Activated CD8-positive, alpha-beta T cell treated with anti-CD3 and anti-CD28 coated beads for 36 hours (primary cell): ENCODE measurements at regions of chr2 and their contacts with region 1.

Region 1: GRCh38 chr2:102005989-102006885 is 14.5 kb downstream of the IL1R2 start:
- DNase-seq: peak; percentile 54
- ATAC-seq: peak; percentile 65
- H3K4me3 Mint-ChIP-seq: no peak overlapping the region
- H3K27ac Mint-ChIP-seq: no peak overlapping the region
- H3K4me1 Mint-ChIP-seq: peaks cover 14% of the 10 kb centered on the region
- H3K27me3 Mint-ChIP-seq: no peaks in the 10 kb centered on the region
- CTCF ChIP-seq: peak; percentile 64

Region 2: DNA sequence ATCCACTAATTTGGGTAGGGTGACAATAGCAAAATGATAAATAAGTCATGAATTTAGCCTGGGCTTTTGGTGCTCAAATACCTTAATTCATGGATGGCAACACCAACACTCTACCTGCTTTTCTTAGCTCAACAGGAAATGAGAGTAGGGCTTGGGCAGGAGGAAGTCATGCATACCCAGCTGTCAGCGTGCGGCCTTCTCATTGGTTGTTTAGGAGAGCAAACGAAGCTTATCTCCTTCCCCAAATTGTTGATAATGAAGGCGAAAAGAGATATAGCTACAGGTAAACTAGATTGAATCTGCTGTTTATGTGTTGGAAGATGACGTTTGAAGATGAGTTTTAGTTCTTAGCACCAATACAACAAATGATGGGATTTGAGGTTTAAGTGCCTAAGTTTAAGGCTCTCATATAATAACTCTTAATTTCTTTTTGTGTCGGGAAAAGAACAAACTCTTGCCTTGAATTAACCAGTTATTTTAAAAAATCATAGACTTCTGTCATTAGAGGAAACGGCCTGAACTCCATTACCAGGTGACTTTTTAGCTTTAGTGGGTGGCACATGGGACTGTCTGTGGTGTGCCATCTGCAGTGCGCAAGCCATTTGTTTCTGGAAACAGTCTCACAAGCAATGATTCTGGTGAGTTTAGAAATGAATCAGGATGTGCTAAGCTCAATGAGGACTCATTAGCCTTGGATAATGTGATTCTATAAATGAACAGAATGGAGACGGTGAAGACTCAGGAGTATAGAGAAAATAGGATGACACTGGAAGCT is 289.0 kb before region 1 on chr2:
- CTCF ChIA-PET with region 1: no interaction called
- POLR2A ChIA-PET with region 1: no interaction called
- intact Hi-C with region 1: no loop called
- DNase-seq: peak; percentile 68
- ATAC-seq: peak; percentile 28
- H3K4me3 Mint-ChIP-seq: peak overlapping the region; percentile 10
- H3K27ac Mint-ChIP-seq: peak overlapping the region; percentile 99
- H3K4me1 Mint-ChIP-seq: peaks cover 72% of the 10 kb centered on the region
- H3K27me3 Mint-ChIP-seq: no peaks in the 10 kb centered on the region
- CTCF ChIP-seq: no peak

Region 3: DNA sequence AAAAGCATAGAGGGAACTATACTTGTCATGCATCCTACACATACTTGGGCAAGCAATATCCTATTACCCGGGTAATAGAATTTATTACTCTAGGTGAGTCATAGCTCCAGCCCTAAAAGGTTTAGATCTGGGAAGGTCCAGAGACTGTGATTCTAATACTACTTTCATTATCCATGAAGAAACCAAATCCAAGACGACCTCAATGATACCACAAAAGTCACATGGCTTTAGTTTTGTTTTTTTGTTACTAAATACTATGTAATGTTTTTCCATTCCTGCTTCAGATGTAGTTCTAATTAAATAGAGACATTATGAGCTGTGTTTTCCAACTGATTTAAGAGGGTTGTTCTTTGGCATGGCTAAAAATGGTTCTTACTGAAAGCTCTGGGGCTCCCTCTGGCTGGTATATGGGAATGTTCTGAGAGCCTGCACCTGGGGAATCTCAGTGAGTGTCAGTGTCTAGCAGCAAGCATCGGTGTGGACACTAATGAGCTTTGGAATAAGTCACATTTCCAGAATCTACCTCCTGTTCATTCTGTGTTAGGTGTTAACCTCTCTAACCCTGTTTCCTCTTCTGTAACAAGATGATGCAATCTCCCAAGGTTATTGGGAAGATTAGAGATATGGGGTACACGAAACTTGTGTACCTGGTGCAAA is 160.1 kb after region 1 on chr2:
- CTCF ChIA-PET with region 1: interaction called, 12 read pairs
- POLR2A ChIA-PET with region 1: no interaction called
- intact Hi-C with region 1: no loop called
- DNase-seq: peak; percentile 14
- ATAC-seq: no peak
- H3K4me3 Mint-ChIP-seq: no peak overlapping the region
- H3K27ac Mint-ChIP-seq: no peak overlapping the region
- H3K4me1 Mint-ChIP-seq: peaks cover 5% of the 10 kb centered on the region
- H3K27me3 Mint-ChIP-seq: no peaks in the 10 kb centered on the region
- CTCF ChIP-seq: no peak